ENCODE measurements at regions of chr22 and their contacts with region 1.

Region 1: GRCh38 chr22:29040385-29041275 is 21.0 kb downstream of the C22orf31 start:
- DNase-seq: peak; percentile 66
- CTCF ChIP-seq: peak; percentile 79

Region 2: DNA sequence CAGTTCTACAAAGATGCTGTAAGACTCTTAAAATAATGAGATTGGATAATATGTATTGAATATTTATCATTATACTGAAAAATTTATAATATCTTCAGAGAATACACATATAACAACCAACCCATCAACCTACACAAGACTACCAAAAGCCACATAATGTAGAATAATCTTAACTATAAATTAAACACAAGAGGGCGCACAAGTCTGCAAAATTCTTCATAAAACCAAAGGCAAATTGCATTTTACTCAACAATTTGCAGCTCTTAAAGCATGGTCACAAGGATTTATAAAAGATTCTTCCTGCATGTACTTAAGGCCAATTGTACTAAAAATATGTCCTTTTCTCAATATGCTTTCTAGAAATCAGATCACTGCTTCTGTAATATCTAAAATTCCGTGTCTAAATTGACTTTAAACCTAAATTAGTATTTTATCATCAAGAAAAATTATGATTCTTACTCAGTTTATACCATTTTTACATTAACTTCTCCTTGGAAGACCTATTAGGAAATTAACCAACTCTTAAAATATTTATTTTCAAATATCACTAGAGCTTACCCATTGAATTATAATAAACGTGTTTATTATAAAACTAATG is 440.0 kb before region 1 on chr22:
- CTCF ChIA-PET with region 1: interaction called, 36 read pairs
- POLR2A ChIA-PET with region 1: no interaction called
- DNase-seq: peak; percentile 37
- CTCF ChIP-seq: peak; percentile 45

Region 3: GRCh38 chr22:28855355-28856094 is 185.1 kb before region 1 on chr22:
- CTCF ChIA-PET with region 1: interaction called, 72 read pairs
- POLR2A ChIA-PET with region 1: no interaction called
- DNase-seq: peak; percentile 69
- CTCF ChIP-seq: peak; percentile 79

Region 4: DNA sequence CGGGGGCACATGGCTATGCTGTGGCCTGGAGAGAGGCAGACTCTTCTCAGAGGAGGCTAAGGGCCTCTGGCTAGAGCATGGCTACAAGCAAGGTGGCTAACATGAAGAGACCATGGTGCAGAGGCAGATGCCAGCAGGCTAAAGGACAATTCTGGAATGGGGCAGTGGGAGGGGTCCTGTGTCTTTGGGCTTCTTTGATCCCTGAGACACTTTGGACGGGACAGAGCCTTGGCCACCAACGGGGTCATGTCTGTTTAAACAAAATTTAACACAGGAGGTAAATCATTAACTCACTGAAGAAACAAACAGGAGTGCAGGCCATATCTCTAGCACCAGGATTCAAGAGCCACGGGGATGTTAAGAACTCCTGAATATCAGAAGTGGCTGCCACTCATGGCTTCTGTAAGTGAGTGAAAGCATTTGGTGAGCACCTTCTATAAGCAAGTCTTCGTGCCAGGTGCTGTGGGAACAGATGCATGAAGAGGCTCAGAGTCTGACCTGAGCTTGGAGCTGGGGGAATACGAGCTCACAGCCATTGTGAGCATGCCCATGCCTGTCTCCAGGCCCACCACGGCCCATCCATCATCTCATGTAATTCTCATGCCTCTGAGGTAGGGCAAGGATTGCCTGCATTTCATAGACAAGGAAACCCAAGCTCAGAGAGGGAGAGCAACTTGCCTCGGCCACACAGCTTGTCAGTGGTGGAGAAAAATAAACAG is 175.6 kb before region 1 on chr22:
- CTCF ChIA-PET with region 1: interaction called, 11 read pairs
- POLR2A ChIA-PET with region 1: no interaction called
- DNase-seq: no peak
- CTCF ChIP-seq: no peak

Region 5: DNA sequence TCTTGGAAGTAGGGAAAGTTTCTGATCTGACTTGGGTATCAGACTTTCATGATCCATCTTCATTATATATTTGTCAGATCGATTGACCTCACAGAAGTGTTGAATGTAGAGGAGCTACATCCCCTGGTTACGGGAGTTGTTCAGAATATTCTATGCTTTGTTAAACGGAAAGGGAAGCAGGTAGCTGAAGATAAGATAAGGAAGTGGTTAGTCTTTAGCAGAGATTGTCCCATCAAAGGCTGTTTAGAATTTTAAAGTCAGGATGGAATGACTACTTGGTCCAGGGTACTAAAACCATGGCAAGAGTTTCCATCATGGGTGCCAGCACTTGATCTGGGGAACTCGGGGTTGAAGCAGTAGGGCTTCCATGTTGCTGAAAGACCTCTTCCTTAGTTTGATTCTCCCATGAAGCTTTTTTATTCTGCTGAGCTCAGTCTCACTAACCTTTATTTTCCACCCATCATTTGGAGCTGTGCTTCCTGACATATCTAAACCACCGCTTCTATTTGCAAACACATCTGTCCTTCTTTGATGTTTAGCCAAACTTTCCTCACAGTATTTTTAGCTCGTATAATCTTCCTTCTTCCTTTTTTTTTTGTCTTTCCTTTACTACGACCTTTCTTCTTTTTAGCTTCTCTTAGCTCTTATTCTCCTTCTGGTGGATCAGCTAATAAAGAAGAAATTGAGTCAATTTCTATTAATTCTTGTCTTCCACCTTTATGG is 25.0 kb after region 1 on chr22:
- CTCF ChIA-PET with region 1: interaction called, 14 read pairs
- POLR2A ChIA-PET with region 1: no interaction called
- DNase-seq: no peak
- CTCF ChIP-seq: no peak

Region 6: GRCh38 chr22:29073654-29074498 is 33.2 kb after region 1 on chr22:
- CTCF ChIA-PET with region 1: interaction called, 11 read pairs
- POLR2A ChIA-PET with region 1: no interaction called
- DNase-seq: no peak
- CTCF ChIP-seq: no peak

Region 7: GRCh38 chr22:29306175-29306834 is 265.7 kb after region 1 on chr22 and contains the start of gene GAS2L1:
- CTCF ChIA-PET with region 1: no interaction called
- POLR2A ChIA-PET with region 1: no interaction called
- DNase-seq: peak; percentile 70
- CTCF ChIP-seq: peak; percentile 63